ENCODE measurements at regions of chrX and their contacts with region 1.

Region 1: GRCh38 chrX:111098874-111099273 is 2.9 kb downstream of the PAK3 start:
- DNase-seq: peak; percentile 77
- H3K4me3 Mint-ChIP-seq: peak overlapping the region; percentile 45
- H3K27ac Mint-ChIP-seq: no peak overlapping the region
- H3K4me1 Mint-ChIP-seq: peaks cover 22% of the 10 kb centered on the region
- H3K27me3 Mint-ChIP-seq: peaks cover 1% of the 10 kb centered on the region

Region 2: DNA sequence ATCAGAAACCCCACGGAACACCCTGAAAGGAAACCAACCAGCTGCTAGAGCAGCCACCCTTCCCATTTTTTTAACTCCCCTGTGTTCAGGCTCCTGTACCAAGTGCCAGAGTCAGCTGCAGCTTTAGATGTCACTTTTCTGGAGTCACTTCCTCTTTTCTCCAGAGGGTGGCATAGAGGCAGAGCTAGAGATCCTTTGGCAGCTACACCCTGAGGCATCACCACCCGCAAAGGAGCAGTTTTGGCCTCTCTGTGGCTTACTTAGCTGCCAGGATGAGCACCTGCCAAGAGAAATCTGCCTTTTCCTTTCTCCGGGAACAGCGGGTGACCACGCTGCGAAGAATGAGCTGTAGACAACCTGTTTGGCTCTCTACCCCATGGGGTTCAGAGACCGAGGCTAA is 245.3 kb before region 1 on chrX:
- CTCF ChIA-PET with region 1: interaction called, 3 read pairs
- POLR2A ChIA-PET with region 1: no interaction called
- intact Hi-C with region 1: loop called (anchors 2 kb)
- DNase-seq: no peak
- H3K4me3 Mint-ChIP-seq: no peak overlapping the region
- H3K27ac Mint-ChIP-seq: no peak overlapping the region
- H3K4me1 Mint-ChIP-seq: no peaks in the 10 kb centered on the region
- H3K27me3 Mint-ChIP-seq: peaks cover 2% of the 10 kb centered on the region

Region 3: GRCh38 chrX:110938977-110939732 is 159.7 kb before region 1 on chrX:
- CTCF ChIA-PET with region 1: no interaction called
- POLR2A ChIA-PET with region 1: no interaction called
- intact Hi-C with region 1: no loop called
- DNase-seq: no peak
- H3K4me3 Mint-ChIP-seq: no peak overlapping the region
- H3K27ac Mint-ChIP-seq: no peak overlapping the region
- H3K4me1 Mint-ChIP-seq: no peaks in the 10 kb centered on the region
- H3K27me3 Mint-ChIP-seq: peaks cover 6% of the 10 kb centered on the region

Region 4: DNA sequence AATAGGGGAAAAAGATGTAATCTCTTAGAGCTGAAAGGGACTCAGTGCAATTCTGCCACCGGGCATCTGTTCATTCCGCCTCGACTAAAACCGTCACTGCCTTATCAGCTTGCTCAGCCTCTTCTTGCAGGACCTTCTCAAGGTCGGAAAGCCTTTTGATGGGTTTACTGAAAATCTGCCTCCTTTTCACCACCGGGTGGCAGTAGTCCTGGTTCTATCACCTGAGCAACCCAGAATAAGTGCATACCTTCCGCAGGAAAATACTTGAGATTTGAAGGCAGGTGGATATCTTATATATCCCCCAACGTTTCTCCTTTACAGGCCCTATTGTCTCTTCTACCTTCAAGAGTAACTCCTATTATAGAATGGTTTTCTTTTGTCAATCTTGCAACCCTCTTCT is 106.3 kb before region 1 on chrX:
- CTCF ChIA-PET with region 1: interaction called, 14 read pairs
- POLR2A ChIA-PET with region 1: no interaction called
- intact Hi-C with region 1: loop called (anchors 1 kb)
- DNase-seq: peak; percentile 22
- H3K4me3 Mint-ChIP-seq: no peak overlapping the region
- H3K27ac Mint-ChIP-seq: no peak overlapping the region
- H3K4me1 Mint-ChIP-seq: no peaks in the 10 kb centered on the region
- H3K27me3 Mint-ChIP-seq: peaks cover 2% of the 10 kb centered on the region

Region 5: DNA sequence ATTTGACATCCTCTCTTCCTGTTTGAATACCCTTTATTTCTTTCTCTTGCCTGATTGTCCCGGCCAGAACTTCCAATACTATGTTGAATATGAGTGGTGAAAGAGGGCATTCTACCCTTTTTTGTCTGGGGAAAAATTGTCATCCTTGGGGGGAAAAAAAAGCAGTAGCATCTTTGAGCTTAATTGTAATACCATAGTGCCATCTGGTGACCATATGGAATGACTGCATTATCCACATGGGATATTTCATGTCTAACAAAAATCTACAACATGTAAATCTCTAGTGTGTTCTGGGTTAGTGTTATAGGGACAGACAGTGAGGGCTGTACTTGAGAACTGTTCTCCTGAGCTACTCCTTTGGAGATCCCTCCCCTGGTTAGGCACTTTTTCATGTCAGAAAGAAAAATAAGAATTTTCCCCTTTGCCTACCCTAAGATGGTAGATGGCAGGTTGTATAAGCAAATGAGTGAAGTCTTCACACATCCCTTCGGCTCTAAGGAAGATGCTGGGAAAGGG is 145.4 kb after region 1 on chrX:
- CTCF ChIA-PET with region 1: interaction called, 23 read pairs
- POLR2A ChIA-PET with region 1: no interaction called
- intact Hi-C with region 1: loop called (anchors 1 kb)
- DNase-seq: no peak
- H3K4me3 Mint-ChIP-seq: no peak overlapping the region
- H3K27ac Mint-ChIP-seq: no peak overlapping the region
- H3K4me1 Mint-ChIP-seq: no peaks in the 10 kb centered on the region
- H3K27me3 Mint-ChIP-seq: no peaks in the 10 kb centered on the region

Region 6: DNA sequence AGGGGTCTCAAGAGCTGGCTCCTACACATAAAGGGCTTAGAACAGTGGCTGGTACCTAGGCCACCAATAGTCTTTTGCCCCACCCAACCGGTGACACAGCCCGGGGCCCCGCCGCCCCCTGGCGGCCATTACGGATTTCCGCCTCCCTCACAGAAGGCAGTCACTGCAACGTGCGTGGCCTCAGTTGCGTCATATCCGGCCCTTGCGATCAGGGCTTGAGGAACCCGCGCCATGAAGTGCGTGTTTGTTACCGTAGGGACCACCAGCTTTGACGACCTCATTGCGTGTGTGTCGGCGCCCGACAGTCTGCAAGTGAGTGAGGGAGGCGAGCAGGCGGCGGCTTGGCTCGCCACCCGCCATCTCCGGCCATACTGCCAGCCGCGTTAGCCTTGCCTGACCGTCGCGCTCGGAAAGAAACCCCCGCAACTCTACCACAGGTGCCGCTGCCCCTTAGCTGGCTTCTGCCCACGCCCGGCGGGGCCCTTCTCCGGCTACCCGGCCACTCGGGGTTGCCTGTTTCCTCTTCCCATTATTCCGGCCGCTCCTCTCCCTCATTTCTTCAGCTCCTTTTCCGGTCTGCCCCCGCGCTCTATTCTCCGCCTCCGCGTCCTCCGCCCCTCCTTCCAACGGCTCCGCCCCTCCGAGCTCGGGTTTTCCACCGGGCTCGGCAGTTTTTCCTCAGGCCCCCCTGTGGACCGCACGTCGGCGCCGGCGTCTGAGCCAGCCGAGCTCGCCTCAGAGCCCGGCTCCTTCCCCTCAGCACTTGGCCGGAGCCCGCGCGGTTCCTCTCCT is 582.3 kb after region 1 on chrX and contains the start of gene ALG13:
- CTCF ChIA-PET with region 1: no interaction called
- POLR2A ChIA-PET with region 1: no interaction called
- intact Hi-C with region 1: loop called (anchors 2 kb)
- DNase-seq: peak; percentile 89
- H3K4me3 Mint-ChIP-seq: peak within 1 kb of the TSS; percentile 81
- H3K27ac Mint-ChIP-seq: peak within 1 kb of the TSS; percentile 95
- H3K4me1 Mint-ChIP-seq: peaks cover 23% of the 10 kb centered on the region
- H3K27me3 Mint-ChIP-seq: no peaks in the 10 kb centered on the region
- total RNA-seq, gene ALG13: 40.1 to 45.4 TPM

Measured in activated CD4-positive, alpha-beta memory T cell treated with anti-CD3 and anti-CD28 coated beads for 36 hours (primary cell).